Activated naive CD4-positive, alpha-beta T cell treated with anti-CD3 and anti-CD28 coated beads for 36 hours (primary cell): ENCODE measurements at regions of chr6 and their contacts with region 1.

Region 1: GRCh38 chr6:125779924-125780539 is 10.7 kb upstream of the NCOA7 start:
- DNase-seq: peak; percentile 90
- H3K4me3 Mint-ChIP-seq: no peak overlapping the region
- H3K27ac Mint-ChIP-seq: no peak overlapping the region
- H3K4me1 Mint-ChIP-seq: peaks cover 15% of the 10 kb centered on the region
- H3K27me3 Mint-ChIP-seq: peaks cover 1% of the 10 kb centered on the region

Region 2: GRCh38 chr6:125790358-125791150 is 10.5 kb after region 1 on chr6 and contains the start of gene NCOA7:
- CTCF ChIA-PET with region 1: interaction called, 52 read pairs
- intact Hi-C with region 1: loop called (anchors 1 kb)
- DNase-seq: peak; percentile 81
- H3K4me3 Mint-ChIP-seq: peak within 1 kb of the TSS; percentile 90
- H3K27ac Mint-ChIP-seq: peak within 1 kb of the TSS; percentile 96
- H3K4me1 Mint-ChIP-seq: peaks cover 51% of the 10 kb centered on the region
- H3K27me3 Mint-ChIP-seq: no peaks in the 10 kb centered on the region
- total RNA-seq, gene NCOA7: 39.2 to 43.1 TPM

Region 3: GRCh38 chr6:125858427-125859320 is 78.6 kb after region 1 on chr6:
- CTCF ChIA-PET with region 1: no interaction called
- intact Hi-C with region 1: loop called (anchors 1 kb)
- DNase-seq: peak; percentile 57
- H3K4me3 Mint-ChIP-seq: no peak overlapping the region
- H3K27ac Mint-ChIP-seq: no peak overlapping the region
- H3K4me1 Mint-ChIP-seq: no peaks in the 10 kb centered on the region
- H3K27me3 Mint-ChIP-seq: no peaks in the 10 kb centered on the region

Region 4: GRCh38 chr6:125918681-125919566 is 138.9 kb after region 1 on chr6:
- CTCF ChIA-PET with region 1: interaction called, 6 read pairs
- intact Hi-C with region 1: loop called (anchors 1 kb)
- DNase-seq: peak; percentile 73
- H3K4me3 Mint-ChIP-seq: peak overlapping the region; percentile 78
- H3K27ac Mint-ChIP-seq: peak overlapping the region; percentile 94
- H3K4me1 Mint-ChIP-seq: peaks cover 33% of the 10 kb centered on the region
- H3K27me3 Mint-ChIP-seq: no peaks in the 10 kb centered on the region

Region 5: DNA sequence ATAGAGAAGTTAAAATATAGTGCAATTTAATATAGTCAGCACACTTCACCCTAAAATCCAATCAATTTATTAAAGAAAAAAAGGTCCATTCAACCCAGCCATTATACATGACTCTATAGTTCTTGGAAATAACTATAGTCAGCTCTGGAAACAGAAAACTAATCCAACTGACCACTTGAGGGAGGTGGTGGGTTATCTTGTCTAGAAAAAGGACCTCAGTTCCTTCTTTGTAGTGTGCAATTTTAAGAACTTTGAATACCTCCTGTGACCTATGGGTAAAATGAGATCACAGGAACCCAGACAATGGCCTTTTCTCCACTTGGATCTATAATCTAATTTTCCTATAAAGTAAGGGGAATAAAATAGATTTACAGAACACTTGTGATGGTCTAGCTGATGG is 396.2 kb after region 1 on chr6:
- CTCF ChIA-PET with region 1: no interaction called
- intact Hi-C with region 1: loop called (anchors 1 kb)
- DNase-seq: no peak
- H3K4me3 Mint-ChIP-seq: no peak overlapping the region
- H3K27ac Mint-ChIP-seq: no peak overlapping the region
- H3K4me1 Mint-ChIP-seq: peaks cover 2% of the 10 kb centered on the region
- H3K27me3 Mint-ChIP-seq: no peaks in the 10 kb centered on the region

Region 6: DNA sequence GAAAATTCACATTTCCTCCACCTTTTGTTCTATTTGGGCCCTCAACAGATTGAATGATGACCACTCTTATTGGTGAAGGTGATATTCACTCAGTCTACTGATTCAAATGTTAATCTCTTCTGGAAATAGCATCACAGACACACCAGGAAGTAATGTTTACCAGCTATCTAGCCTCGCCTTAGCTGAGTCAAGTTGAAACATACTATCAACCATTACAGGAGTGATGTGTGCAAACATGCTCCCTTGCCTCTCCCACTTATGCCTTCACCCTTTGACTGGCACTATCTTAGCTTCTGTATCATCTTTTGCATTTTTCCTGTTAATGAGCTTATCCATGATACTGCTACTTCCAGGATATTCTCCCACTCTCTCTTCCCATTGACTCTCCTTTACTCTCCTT is 751.8 kb after region 1 on chr6:
- CTCF ChIA-PET with region 1: no interaction called
- intact Hi-C with region 1: no loop called
- DNase-seq: no peak
- H3K4me3 Mint-ChIP-seq: no peak overlapping the region
- H3K27ac Mint-ChIP-seq: no peak overlapping the region
- H3K4me1 Mint-ChIP-seq: no peaks in the 10 kb centered on the region
- H3K27me3 Mint-ChIP-seq: no peaks in the 10 kb centered on the region

Region 7: GRCh38 chr6:127120787-127121636 is 1341.0 kb after region 1 on chr6:
- CTCF ChIA-PET with region 1: no interaction called
- intact Hi-C with region 1: loop called (anchors 5 kb)
- DNase-seq: peak; percentile 90
- H3K4me3 Mint-ChIP-seq: no peak overlapping the region
- H3K27ac Mint-ChIP-seq: no peak overlapping the region
- H3K4me1 Mint-ChIP-seq: peaks cover 12% of the 10 kb centered on the region
- H3K27me3 Mint-ChIP-seq: peaks cover 51% of the 10 kb centered on the region